CD8-positive, alpha-beta T cell (primary cell): ENCODE measurements at regions of chr1 and their contacts with region 1.

Region 1: GRCh38 chr1:172699111-172699510 is 40.2 kb downstream of the FASLG start:
- DNase-seq: peak; percentile 43 to 92 (median 77)
- ATAC-seq: peak; percentile 76
- H3K4me3 ChIP-seq: peak overlapping the region in 1 of 2 experiments; percentile 0
- H3K4me3 Mint-ChIP-seq: peak overlapping the region; percentile 64
- H3K27ac ChIP-seq: peak overlapping the region; percentile 6 to 84
- H3K27ac Mint-ChIP-seq: peak overlapping the region; percentile 91
- H3K4me1 ChIP-seq: peaks cover 76% of the 10 kb centered on the region
- H3K4me1 Mint-ChIP-seq: peaks cover 49% of the 10 kb centered on the region
- H3K27me3 ChIP-seq: no peaks in the 10 kb centered on the region
- H3K27me3 Mint-ChIP-seq: no peaks in the 10 kb centered on the region
- CTCF ChIP-seq: no peak

Region 2: DNA sequence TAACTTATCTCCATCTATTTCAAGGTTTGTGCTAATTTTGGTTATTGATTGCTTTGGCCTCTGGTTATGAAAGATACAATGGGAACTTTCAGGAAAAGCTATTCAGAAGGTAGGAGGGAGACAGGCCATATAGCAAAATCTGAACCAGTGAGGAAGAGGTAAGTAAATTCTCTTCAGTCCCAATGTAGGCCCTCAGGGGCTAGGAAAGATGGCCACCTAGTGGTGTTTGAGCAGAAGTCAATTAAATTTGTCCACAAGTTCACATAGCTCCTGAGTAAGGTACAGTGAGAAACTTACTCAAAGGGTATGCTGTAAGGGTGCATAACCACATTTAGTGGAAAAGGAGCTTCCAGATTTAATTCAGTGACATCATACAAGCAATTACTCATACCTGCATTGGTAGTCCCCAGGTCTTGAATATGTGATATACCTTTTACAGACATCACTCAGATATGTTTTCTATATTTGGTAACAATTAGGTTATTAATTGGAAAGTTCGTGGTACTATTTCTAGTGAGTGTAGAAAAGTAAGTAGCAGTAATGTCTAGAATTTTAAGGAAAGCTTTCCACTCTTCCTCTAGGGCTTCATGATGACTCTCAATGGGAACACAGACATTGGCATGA is 1472.3 kb before region 1 on chr1:
- CTCF ChIA-PET with region 1: no interaction called
- POLR2A ChIA-PET with region 1: no interaction called
- intact Hi-C with region 1: no loop called
- DNase-seq: peak in 2 of 9 experiments; percentile 18 to 35
- ATAC-seq: no peak
- H3K4me3 ChIP-seq: no peak overlapping the region
- H3K4me3 Mint-ChIP-seq: no peak overlapping the region
- H3K27ac ChIP-seq: no peak overlapping the region
- H3K27ac Mint-ChIP-seq: no peak overlapping the region
- H3K4me1 ChIP-seq: no peaks in the 10 kb centered on the region
- H3K4me1 Mint-ChIP-seq: no peaks in the 10 kb centered on the region
- H3K27me3 ChIP-seq: no peaks in the 10 kb centered on the region
- H3K27me3 Mint-ChIP-seq: peaks cover 4% of the 10 kb centered on the region
- CTCF ChIP-seq: peak; percentile 49

Region 3: DNA sequence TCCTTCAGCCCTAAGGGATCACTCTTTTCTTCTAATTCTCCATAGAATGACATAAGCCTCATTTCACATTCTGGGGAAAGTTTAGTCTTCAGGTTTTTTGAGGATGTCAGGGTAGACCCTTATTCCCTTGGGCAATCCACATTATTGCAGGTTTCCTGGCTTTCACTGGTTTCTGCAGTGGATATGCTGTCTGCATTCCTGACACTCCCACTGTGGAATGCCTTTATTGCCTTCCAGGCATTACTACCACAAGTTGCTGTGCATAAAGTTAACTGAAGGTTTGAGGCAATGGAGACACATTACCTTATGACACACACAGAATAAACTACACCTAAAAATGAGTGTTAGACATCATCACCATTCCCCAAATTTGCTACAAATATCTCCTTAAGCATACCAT is 27.5 kb before region 1 on chr1:
- CTCF ChIA-PET with region 1: no interaction called
- POLR2A ChIA-PET with region 1: interaction called, 5 read pairs
- intact Hi-C with region 1: loop called (anchors 1 to 2 kb)
- DNase-seq: no peak
- ATAC-seq: no peak
- H3K4me3 ChIP-seq: no peak overlapping the region
- H3K4me3 Mint-ChIP-seq: no peak overlapping the region
- H3K27ac ChIP-seq: peak overlapping the region in 1 of 2 experiments; percentile 62
- H3K27ac Mint-ChIP-seq: no peak overlapping the region
- H3K4me1 ChIP-seq: peaks cover 54% of the 10 kb centered on the region
- H3K4me1 Mint-ChIP-seq: peaks cover 64% of the 10 kb centered on the region
- H3K27me3 ChIP-seq: no peaks in the 10 kb centered on the region
- H3K27me3 Mint-ChIP-seq: peaks cover 49% of the 10 kb centered on the region
- CTCF ChIP-seq: no peak

Region 4: DNA sequence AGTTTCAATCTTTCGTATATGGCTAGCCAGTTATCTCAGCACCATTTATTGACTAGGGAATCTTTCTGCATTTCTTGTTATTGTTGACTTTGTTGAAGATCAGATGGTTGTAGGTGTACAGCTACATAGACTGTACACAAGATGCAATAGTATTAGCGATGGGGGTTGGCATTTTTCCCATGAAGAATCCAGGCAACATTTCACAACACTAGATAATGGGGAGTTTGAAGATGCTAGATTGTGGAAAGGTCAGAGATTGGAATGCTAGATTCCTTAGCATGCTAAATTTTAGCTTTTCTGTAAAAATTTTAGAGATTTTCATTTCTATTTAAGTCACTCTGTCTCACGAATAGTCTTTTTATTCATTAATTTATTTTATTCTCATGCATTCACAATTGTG is 14.3 kb before region 1 on chr1:
- CTCF ChIA-PET with region 1: no interaction called
- POLR2A ChIA-PET with region 1: no interaction called
- intact Hi-C with region 1: loop called in 1 of 2 experiments (anchors 2 kb)
- DNase-seq: no peak
- ATAC-seq: no peak
- H3K4me3 ChIP-seq: no peak overlapping the region
- H3K4me3 Mint-ChIP-seq: no peak overlapping the region
- H3K27ac ChIP-seq: no peak overlapping the region
- H3K27ac Mint-ChIP-seq: no peak overlapping the region
- H3K4me1 ChIP-seq: no peaks in the 10 kb centered on the region
- H3K4me1 Mint-ChIP-seq: peaks cover 14% of the 10 kb centered on the region
- H3K27me3 ChIP-seq: no peaks in the 10 kb centered on the region
- H3K27me3 Mint-ChIP-seq: peaks cover 8% of the 10 kb centered on the region
- CTCF ChIP-seq: no peak

Region 5: DNA sequence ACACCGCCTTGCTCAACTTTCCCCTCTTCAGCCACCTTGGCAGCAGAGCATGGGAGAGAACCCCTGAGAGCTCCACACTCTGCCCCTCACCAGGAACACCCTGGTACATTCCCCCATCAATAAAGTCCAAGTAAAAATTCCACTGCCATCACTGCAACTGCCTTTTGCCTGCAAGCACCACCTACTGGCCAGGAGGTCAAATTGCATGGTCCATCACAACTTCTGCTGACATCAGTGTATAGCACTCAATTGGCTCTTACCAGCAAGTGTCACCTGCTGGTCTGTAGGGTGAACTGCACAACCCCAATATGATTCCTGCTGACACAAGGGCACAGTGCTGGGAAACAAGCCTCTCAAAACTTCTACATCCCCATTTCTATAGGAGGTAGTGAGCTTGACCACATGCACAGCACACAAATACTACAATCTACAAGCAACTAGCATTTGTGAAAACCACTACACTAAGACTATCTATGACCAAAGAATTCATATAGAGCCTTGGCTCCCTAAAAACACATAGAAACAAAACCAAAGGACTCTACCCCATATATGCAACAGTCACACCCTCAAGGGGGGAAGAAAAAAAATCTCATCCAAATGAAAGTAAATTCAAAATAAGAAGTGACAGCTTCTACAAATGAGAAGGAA is 29.0 kb after region 1 on chr1:
- CTCF ChIA-PET with region 1: no interaction called
- POLR2A ChIA-PET with region 1: no interaction called
- intact Hi-C with region 1: no loop called
- DNase-seq: peak in 4 of 9 experiments; percentile 25 to 77 (median 55)
- ATAC-seq: peak; percentile 99
- H3K4me3 ChIP-seq: no peak overlapping the region
- H3K4me3 Mint-ChIP-seq: no peak overlapping the region
- H3K27ac ChIP-seq: no peak overlapping the region
- H3K27ac Mint-ChIP-seq: no peak overlapping the region
- H3K4me1 ChIP-seq: no peaks in the 10 kb centered on the region
- H3K4me1 Mint-ChIP-seq: peaks cover 23% of the 10 kb centered on the region
- H3K27me3 ChIP-seq: no peaks in the 10 kb centered on the region
- H3K27me3 Mint-ChIP-seq: no peaks in the 10 kb centered on the region
- CTCF ChIP-seq: peak; percentile 57

Region 6: GRCh38 chr1:172951730-172952365 is 252.7 kb after region 1 on chr1:
- CTCF ChIA-PET with region 1: no interaction called
- POLR2A ChIA-PET with region 1: no interaction called
- intact Hi-C with region 1: no loop called
- DNase-seq: no peak
- ATAC-seq: no peak
- H3K4me3 ChIP-seq: no peak overlapping the region
- H3K4me3 Mint-ChIP-seq: no peak overlapping the region
- H3K27ac ChIP-seq: no peak overlapping the region
- H3K27ac Mint-ChIP-seq: no peak overlapping the region
- H3K4me1 ChIP-seq: peaks cover 3% of the 10 kb centered on the region
- H3K4me1 Mint-ChIP-seq: peaks cover 11% of the 10 kb centered on the region
- H3K27me3 ChIP-seq: no peaks in the 10 kb centered on the region
- H3K27me3 Mint-ChIP-seq: no peaks in the 10 kb centered on the region
- CTCF ChIP-seq: no peak

Region 7: GRCh38 chr1:173020138-173020750 is 321.1 kb after region 1 on chr1:
- CTCF ChIA-PET with region 1: no interaction called
- POLR2A ChIA-PET with region 1: no interaction called
- intact Hi-C with region 1: no loop called
- DNase-seq: no peak
- ATAC-seq: no peak
- H3K4me3 ChIP-seq: no peak overlapping the region
- H3K4me3 Mint-ChIP-seq: no peak overlapping the region
- H3K27ac ChIP-seq: no peak overlapping the region
- H3K27ac Mint-ChIP-seq: no peak overlapping the region
- H3K4me1 ChIP-seq: peaks cover 4% of the 10 kb centered on the region
- H3K4me1 Mint-ChIP-seq: peaks cover 7% of the 10 kb centered on the region
- H3K27me3 ChIP-seq: no peaks in the 10 kb centered on the region
- H3K27me3 Mint-ChIP-seq: no peaks in the 10 kb centered on the region
- CTCF ChIP-seq: no peak